CD4-positive, alpha-beta T cell (primary cell): ENCODE measurements at regions of chr1 and their contacts with region 1.

Region 1: DNA sequence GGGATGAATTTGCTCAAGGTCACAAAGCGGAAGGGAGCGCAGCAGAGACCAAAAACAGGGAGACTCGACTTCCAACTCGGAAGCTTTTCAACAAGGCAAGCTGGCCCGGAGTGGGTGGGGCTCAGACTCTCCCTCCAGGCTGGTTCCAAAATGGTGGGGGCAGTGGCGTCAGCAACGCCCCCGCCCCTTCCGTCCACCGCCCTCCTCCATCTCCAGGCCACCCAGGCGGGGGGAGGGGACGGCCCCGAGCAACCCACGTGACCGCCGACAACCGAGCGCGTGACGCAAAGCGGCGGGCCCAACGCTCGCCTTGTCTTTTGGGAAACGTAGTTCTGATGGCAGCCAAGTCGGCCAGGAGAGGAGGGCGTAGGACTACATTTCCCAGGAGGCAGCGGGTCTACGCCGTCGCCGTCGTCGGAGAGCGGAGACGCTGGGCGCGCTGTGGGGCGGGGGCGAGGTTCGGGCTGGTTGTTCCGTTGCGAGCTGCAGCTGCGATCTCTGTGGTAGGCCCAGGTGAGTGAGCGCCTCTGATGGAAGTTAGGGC is at the start of gene THRAP3:
- DNase-seq: peak; percentile 98 to 100 (median 99)
- ATAC-seq: peak; percentile 85
- H3K4me3 ChIP-seq: peak within 1 kb of the TSS; percentile 80
- H3K4me3 Mint-ChIP-seq: peak within 1 kb of the TSS; percentile 97
- H3K27ac ChIP-seq: peak within 1 kb of the TSS; percentile 97 to 99
- H3K27ac Mint-ChIP-seq: peak within 1 kb of the TSS; percentile 97
- H3K4me1 ChIP-seq: peaks cover 47% of the 10 kb centered on the region
- H3K4me1 Mint-ChIP-seq: peaks cover 33% of the 10 kb centered on the region
- H3K27me3 ChIP-seq: no peaks in the 10 kb centered on the region
- H3K27me3 Mint-ChIP-seq: no peaks in the 10 kb centered on the region
- CTCF ChIP-seq: no peak
- total RNA-seq, gene THRAP3: 68.7 to 76.1 TPM

Region 2: DNA sequence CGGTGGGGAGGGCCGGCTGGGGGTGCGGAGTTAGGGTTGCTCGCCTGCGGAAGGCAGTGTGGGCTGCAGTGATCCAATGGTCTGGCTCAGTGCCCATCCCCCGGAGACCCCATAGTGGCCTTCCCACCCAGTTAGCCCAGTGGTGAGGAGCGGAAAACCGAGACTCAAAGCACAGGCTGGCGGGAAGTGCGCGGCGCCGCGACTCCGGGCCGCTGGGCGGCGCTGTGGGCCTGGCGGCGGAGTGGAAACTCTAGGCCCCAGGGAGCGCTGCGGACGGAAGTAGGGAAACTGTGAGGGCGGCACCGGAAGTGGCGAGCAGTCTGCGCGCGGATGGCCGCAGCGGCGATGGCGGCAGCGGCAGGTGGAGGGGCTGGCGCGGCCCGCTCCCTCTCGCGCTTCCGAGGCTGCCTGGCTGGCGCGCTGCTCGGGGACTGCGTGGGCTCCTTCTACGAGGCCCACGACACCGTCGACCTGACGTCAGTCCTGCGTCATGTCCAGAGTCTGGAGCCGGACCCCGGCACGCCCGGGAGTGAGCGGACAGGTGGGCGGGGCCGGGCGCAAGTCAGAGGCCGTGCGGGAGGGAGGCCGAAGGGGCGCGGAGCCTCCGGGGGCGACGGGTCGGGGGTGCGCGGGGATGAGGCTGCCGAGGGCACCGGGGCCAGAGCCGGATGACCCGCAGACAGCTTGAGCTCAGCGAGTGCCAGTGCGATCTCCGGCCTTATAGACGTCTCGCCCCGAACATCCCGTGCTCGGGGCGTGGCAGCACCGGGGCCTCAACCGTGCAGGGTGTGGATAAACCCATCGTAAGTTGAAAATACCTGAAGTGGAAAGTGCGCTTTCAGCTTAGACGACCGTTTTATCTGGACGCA is 135.3 kb before region 1 on chr1 and contains the start of gene ADPRS:
- CTCF ChIA-PET with region 1: no interaction called
- POLR2A ChIA-PET with region 1: interaction called, 9 read pairs
- intact Hi-C with region 1: loop called in 1 of 2 experiments (anchors 1 kb)
- DNase-seq: peak; percentile 83 to 96 (median 88)
- ATAC-seq: peak; percentile 88
- H3K4me3 ChIP-seq: peak within 1 kb of the TSS; percentile 95
- H3K4me3 Mint-ChIP-seq: peak within 1 kb of the TSS; percentile 93
- H3K27ac ChIP-seq: peak within 1 kb of the TSS; percentile 73 to 83
- H3K27ac Mint-ChIP-seq: peak within 1 kb of the TSS; percentile 86
- H3K4me1 ChIP-seq: peaks cover 54% of the 10 kb centered on the region
- H3K4me1 Mint-ChIP-seq: peaks cover 23% of the 10 kb centered on the region
- H3K27me3 ChIP-seq: peaks cover 13 to 14% of the 10 kb centered on the region in 2 experiments
- H3K27me3 Mint-ChIP-seq: peaks cover 21% of the 10 kb centered on the region
- CTCF ChIP-seq: peak; percentile 96
- total RNA-seq, gene ADPRS: 22.6 to 24.6 TPM

Region 3: DNA sequence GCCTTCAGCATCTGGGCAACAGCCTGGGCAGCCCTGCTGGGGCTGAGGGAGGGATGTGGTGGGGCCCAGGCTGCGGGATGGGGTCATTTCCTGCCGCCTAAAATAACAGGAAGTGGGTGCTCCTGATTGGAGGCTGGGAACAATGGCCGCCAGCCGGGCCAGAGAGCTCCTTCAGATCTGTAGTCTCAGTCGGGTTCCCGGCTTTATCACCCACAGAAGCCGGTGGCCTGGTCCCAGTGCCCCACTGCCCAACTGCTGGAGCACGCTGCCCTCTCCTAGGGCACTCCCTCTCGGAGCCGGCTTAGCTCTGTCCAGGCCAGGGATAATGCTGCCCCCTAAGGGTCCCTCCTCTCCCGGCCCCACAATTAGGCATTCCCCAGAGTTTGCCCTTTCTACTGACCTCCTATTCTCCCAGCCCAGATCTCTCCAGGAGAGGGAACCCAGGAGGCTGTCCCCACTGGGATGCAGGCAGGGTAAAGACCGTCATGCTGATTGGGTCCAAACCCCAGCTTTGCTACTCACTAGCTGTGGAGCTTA is 63.0 kb before region 1 on chr1:
- CTCF ChIA-PET with region 1: no interaction called
- POLR2A ChIA-PET with region 1: interaction called, 73 read pairs
- intact Hi-C with region 1: loop called in 1 of 2 experiments (anchors 5 kb)
- DNase-seq: peak; percentile 41 to 85 (median 64)
- ATAC-seq: peak; percentile 25
- H3K4me3 ChIP-seq: peak overlapping the region; percentile 61
- H3K4me3 Mint-ChIP-seq: peak overlapping the region; percentile 88
- H3K27ac ChIP-seq: peak overlapping the region; percentile 91 to 93
- H3K27ac Mint-ChIP-seq: peak overlapping the region; percentile 97
- H3K4me1 ChIP-seq: peaks cover 79% of the 10 kb centered on the region
- H3K4me1 Mint-ChIP-seq: peaks cover 72% of the 10 kb centered on the region
- H3K27me3 ChIP-seq: no peaks in the 10 kb centered on the region
- H3K27me3 Mint-ChIP-seq: no peaks in the 10 kb centered on the region
- CTCF ChIP-seq: no peak

Region 4: GRCh38 chr1:36211841-36212240 is 12.2 kb before region 1 on chr1:
- CTCF ChIA-PET with region 1: interaction called, 3 read pairs
- POLR2A ChIA-PET with region 1: interaction called, 14 read pairs
- intact Hi-C with region 1: no loop called
- DNase-seq: no peak
- ATAC-seq: no peak
- H3K4me3 ChIP-seq: no peak overlapping the region
- H3K4me3 Mint-ChIP-seq: no peak overlapping the region
- H3K27ac ChIP-seq: no peak overlapping the region
- H3K27ac Mint-ChIP-seq: no peak overlapping the region
- H3K4me1 ChIP-seq: no peaks in the 10 kb centered on the region
- H3K4me1 Mint-ChIP-seq: no peaks in the 10 kb centered on the region
- H3K27me3 ChIP-seq: no peaks in the 10 kb centered on the region
- H3K27me3 Mint-ChIP-seq: no peaks in the 10 kb centered on the region
- CTCF ChIP-seq: no peak

Region 5: DNA sequence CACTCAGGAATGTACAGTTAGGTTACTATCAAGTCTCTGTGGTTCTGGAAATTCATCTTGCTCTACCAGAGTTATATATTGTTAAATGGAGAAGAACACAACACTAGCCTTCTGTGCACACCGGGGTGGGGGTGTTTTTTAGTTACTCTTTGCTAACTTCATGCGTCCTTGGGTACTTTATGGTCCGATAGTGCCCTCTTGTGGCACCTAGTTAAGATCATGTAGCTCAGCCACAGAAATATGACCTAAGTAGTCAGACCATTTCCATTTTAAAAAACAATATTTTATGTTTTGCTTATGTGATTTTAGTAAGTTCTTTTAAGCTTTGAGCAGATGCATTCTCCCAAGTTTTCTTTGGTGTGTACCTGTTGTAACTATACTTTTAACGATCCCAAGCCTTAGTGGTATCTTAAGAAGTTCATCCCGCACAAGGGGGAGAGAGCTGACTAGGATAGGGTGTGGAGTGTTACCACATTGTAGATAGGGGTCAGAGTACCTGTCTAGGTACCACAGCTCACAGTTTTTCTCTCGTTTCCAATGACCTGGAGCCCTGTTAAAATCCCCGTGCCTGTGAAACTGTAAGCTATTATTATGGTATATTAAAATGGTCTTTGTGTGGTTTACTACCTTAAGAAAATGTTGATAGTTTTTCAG is 61.5 kb after region 1 on chr1:
- CTCF ChIA-PET with region 1: interaction called, 4 read pairs
- POLR2A ChIA-PET with region 1: interaction called, 9 read pairs
- intact Hi-C with region 1: loop called in 1 of 2 experiments (anchors 2 kb)
- DNase-seq: peak; percentile 22 to 92 (median 50)
- ATAC-seq: peak; percentile 99
- H3K4me3 ChIP-seq: no peak overlapping the region
- H3K4me3 Mint-ChIP-seq: no peak overlapping the region
- H3K27ac ChIP-seq: no peak overlapping the region
- H3K27ac Mint-ChIP-seq: peak overlapping the region; percentile 34
- H3K4me1 ChIP-seq: no peaks in the 10 kb centered on the region
- H3K4me1 Mint-ChIP-seq: peaks cover 25% of the 10 kb centered on the region
- H3K27me3 ChIP-seq: no peaks in the 10 kb centered on the region
- H3K27me3 Mint-ChIP-seq: no peaks in the 10 kb centered on the region
- CTCF ChIP-seq: peak; percentile 83

Region 6: DNA sequence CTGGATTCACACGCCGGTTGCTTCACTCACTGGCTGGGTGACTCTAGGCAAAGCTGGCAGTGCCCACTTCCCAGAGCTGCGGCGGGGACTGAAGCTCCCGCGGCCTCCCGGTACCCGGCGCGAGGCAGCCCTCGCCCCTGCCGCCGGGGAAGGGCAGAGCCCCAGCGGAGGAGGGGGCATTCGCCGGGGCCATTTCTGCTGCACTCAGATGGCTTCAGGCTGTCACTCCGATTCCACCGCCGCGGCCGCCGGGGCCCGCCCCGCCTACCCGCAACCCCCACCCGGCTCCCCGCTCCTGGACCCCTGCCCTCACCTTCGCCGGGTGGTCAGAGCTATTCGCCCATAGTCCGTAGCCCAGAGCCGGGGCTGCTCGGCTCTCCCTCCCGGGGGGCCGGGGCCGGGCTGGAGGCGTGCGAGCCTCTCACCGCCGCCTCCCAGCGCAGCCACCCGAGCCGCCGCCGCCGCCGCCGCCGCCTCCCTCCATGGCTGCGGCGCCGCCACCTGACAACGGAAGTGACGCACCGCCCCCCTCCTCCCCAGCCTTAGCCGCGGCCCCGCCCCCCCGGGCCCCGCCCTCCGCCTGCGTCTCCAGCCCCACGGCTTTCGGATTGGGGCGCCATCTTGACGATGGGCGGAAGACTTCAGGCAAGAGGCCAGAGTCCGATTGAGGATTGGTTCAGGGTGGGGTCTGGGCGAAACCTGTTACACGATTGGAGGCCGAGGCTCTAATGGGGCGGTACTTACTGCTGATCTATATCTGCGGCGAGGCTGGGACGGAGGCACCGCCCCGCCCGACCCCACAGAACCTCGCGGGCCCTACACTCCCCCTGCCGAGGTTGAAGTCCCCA is 161.6 kb after region 1 on chr1 and contains the start of gene STK40:
- CTCF ChIA-PET with region 1: no interaction called
- POLR2A ChIA-PET with region 1: interaction called, 4 read pairs
- intact Hi-C with region 1: loop called in 1 of 2 experiments (anchors 5 kb)
- DNase-seq: peak; percentile 97 to 99 (median 98)
- ATAC-seq: peak; percentile 84
- H3K4me3 ChIP-seq: peak within 1 kb of the TSS; percentile 72
- H3K4me3 Mint-ChIP-seq: peak within 1 kb of the TSS; percentile 89
- H3K27ac ChIP-seq: peak within 1 kb of the TSS; percentile 92
- H3K27ac Mint-ChIP-seq: peak within 1 kb of the TSS; percentile 98
- H3K4me1 ChIP-seq: peaks cover 56% of the 10 kb centered on the region
- H3K4me1 Mint-ChIP-seq: peaks cover 59% of the 10 kb centered on the region
- H3K27me3 ChIP-seq: no peaks in the 10 kb centered on the region
- H3K27me3 Mint-ChIP-seq: no peaks in the 10 kb centered on the region
- CTCF ChIP-seq: no peak
- total RNA-seq, gene STK40: 17.8 to 20.7 TPM